Activated CD4-positive, alpha-beta T cell treated with anti-CD3 and anti-CD28 coated beads, Interleukin-2, amount 10 ng/mL, durations not matched to agents 24 days and 14 days (primary cell): ENCODE measurements at regions of chr5 and their contacts with region 1.

Region 1: GRCh38 chr5:44875661-44876605 is 67.2 kb downstream of the MRPS30 start:
- DNase-seq: peak; percentile 80
- H3K4me3 Mint-ChIP-seq: peak overlapping the region; percentile 76
- H3K27ac Mint-ChIP-seq: peak overlapping the region; percentile 96
- H3K4me1 Mint-ChIP-seq: peaks cover 13% of the 10 kb centered on the region
- H3K27me3 Mint-ChIP-seq: no peaks in the 10 kb centered on the region

Region 2: GRCh38 chr5:44808435-44809214 is 67.3 kb before region 1 on chr5 and contains the start of gene MRPS30:
- intact Hi-C with region 1: loop called (anchors 1 kb)
- DNase-seq: peak; percentile 97
- H3K4me3 Mint-ChIP-seq: peak within 1 kb of the TSS; percentile 98
- H3K27ac Mint-ChIP-seq: peak within 1 kb of the TSS; percentile 98
- H3K4me1 Mint-ChIP-seq: peaks cover 26% of the 10 kb centered on the region
- H3K27me3 Mint-ChIP-seq: no peaks in the 10 kb centered on the region
- total RNA-seq, gene MRPS30: 67.4 and 69.3 TPM in 2 replicates

Region 3: GRCh38 chr5:44932922-44933585 is 57.1 kb after region 1 on chr5:
- intact Hi-C with region 1: loop called (anchors 5 kb)
- DNase-seq: no peak
- H3K4me3 Mint-ChIP-seq: no peak overlapping the region
- H3K27ac Mint-ChIP-seq: no peak overlapping the region
- H3K4me1 Mint-ChIP-seq: peaks cover 4% of the 10 kb centered on the region
- H3K27me3 Mint-ChIP-seq: no peaks in the 10 kb centered on the region

Region 4: DNA sequence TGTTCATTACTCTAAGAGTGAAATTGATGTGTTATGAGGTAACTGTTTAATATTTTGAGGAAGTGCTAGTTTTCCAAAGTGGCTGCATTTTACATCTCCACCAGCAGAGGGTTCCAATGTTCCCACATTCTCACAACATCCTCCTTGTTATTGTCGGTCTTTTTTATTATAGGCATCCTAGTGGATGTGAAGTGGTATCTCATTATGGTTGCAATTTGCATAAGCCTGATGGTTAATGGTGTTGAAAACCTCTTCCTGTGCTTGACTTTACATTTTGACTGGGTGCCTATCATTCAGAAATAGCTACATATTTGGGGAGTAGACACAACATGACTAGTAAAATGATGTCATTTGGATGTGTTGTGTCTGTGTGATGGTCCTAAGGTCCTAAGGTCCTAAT is 76.4 kb after region 1 on chr5:
- intact Hi-C with region 1: loop called (anchors 5 kb)
- DNase-seq: no peak
- H3K4me3 Mint-ChIP-seq: no peak overlapping the region
- H3K27ac Mint-ChIP-seq: no peak overlapping the region
- H3K4me1 Mint-ChIP-seq: no peaks in the 10 kb centered on the region
- H3K27me3 Mint-ChIP-seq: no peaks in the 10 kb centered on the region